MCF 10A (cell line): ENCODE measurements at regions of chr7 and their contacts with region 1.

Region 1: DNA sequence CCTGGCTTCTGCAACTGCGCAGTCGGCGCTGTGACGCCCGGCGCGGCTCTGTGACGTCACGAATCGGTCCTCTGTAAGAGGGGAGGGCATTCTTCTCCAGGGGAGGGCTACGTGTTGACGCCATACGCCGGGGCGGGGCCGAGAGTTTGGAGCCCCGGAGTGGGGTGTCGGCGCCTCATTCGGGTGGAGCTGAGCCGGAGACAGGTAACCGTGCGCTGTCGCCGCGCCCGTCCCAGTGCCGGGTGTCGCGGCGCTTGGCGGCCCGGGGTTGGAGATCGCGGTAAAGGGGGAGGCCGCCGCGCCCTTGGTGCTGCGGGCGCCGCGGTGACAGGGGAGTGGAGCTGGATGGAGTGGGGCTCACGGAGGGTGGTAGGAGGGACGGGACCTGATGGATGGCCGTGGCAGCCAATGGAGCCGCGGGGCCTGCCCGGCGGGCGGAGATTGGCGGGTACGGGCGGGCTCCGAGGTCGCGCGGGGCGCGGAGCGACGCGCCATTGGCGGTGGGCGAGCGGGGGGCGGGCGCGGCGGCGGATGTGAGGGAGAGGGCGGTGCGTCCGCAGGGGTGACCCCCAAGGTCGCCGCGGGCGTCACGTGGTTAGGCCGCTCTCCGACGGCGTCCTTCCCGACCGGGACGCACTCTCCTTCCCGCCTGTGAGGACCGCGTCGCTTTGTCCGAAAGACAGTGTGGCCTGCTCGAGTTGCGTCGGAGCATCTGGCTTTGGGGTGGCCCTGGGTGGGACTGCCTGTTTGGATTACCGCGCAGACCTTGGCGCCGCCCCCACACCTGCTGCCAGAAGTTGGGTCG is at the start of gene OGDH:
- DNase-seq: peak; percentile 98
- H3K4me3 Mint-ChIP-seq: peak within 1 kb of the TSS; percentile 97
- H3K27ac Mint-ChIP-seq: peak within 1 kb of the TSS; percentile 99
- H3K4me1 Mint-ChIP-seq: peaks cover 9% of the 10 kb centered on the region
- H3K27me3 Mint-ChIP-seq: no peaks in the 10 kb centered on the region
- CTCF ChIP-seq: no peak
- total RNA-seq, gene OGDH: 75.1 and 91.1 TPM in 2 replicates

Region 2: DNA sequence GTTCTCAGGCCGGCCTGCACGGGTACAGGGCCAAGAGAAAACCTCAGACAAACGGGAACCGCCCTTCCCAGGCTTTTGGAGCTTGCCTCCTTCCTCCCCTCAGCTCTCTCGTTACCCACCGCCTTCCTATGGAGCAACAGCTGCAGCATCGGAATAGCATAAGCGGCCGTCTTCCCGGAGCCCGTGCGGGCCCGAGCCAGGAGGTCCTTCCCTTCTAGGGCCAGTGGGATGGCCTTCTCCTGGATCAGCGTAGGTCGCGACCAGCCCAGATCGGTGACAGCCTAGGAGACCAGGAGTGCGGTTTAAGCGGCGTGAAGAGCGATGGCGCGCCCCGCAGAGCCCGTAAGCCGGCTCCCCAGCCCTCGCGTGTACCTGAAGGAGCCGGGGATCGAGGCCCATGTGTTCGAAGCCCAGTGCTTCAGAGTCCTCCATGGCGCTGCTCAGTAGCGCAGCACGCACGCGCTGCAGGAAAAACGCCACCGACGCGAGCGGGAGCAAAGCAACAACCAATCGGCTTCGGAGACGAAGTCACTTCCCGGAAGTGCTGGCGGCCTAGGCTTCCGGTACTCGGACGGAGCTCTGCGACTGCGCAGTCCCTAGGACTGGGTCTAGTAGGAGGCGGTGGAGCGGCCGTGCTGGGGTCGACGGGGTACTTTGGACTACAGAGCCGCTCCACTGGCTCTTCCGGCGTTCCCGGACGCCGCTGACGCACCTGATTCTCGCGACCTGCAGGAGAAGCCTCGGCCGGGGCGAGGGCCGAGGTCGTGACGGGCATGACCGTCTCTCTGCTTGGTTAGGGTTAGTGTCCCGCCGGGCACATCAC is 33.0 kb before region 1 on chr7 and contains the start of gene DDX56:
- CTCF ChIA-PET with region 1: no interaction called
- POLR2A ChIA-PET with region 1: interaction called, 15 read pairs
- intact Hi-C with region 1: no loop called
- DNase-seq: peak; percentile 94
- H3K4me3 Mint-ChIP-seq: peak within 1 kb of the TSS; percentile 98
- H3K27ac Mint-ChIP-seq: peak within 1 kb of the TSS; percentile 95
- H3K4me1 Mint-ChIP-seq: peaks cover 21% of the 10 kb centered on the region
- H3K27me3 Mint-ChIP-seq: no peaks in the 10 kb centered on the region
- CTCF ChIP-seq: no peak
- total RNA-seq, gene DDX56: 104 and 105 TPM in 2 replicates

Region 3: GRCh38 chr7:44617225-44617890 is 10.7 kb after region 1 on chr7:
- CTCF ChIA-PET with region 1: interaction called, 3 read pairs
- POLR2A ChIA-PET with region 1: interaction called, 23 read pairs
- intact Hi-C with region 1: no loop called
- DNase-seq: peak; percentile 9
- H3K4me3 Mint-ChIP-seq: no peak overlapping the region
- H3K27ac Mint-ChIP-seq: peak overlapping the region; percentile 75
- H3K4me1 Mint-ChIP-seq: peaks cover 30% of the 10 kb centered on the region
- H3K27me3 Mint-ChIP-seq: no peaks in the 10 kb centered on the region
- CTCF ChIP-seq: no peak

Region 4: GRCh38 chr7:44638611-44639557 is 32.2 kb after region 1 on chr7:
- CTCF ChIA-PET with region 1: interaction called, 4 read pairs
- POLR2A ChIA-PET with region 1: interaction called, 92 read pairs
- intact Hi-C with region 1: loop called (anchors 1 kb)
- DNase-seq: peak; percentile 90
- H3K4me3 Mint-ChIP-seq: peak overlapping the region; percentile 59
- H3K27ac Mint-ChIP-seq: peak overlapping the region; percentile 98
- H3K4me1 Mint-ChIP-seq: peaks cover 48% of the 10 kb centered on the region
- H3K27me3 Mint-ChIP-seq: no peaks in the 10 kb centered on the region
- CTCF ChIP-seq: no peak

Region 5: GRCh38 chr7:44735403-44736165 is 128.9 kb after region 1 on chr7:
- CTCF ChIA-PET with region 1: interaction called, 4 read pairs
- POLR2A ChIA-PET with region 1: interaction called, 13 read pairs
- intact Hi-C with region 1: no loop called
- DNase-seq: peak; percentile 95
- H3K4me3 Mint-ChIP-seq: no peak overlapping the region
- H3K27ac Mint-ChIP-seq: peak overlapping the region; percentile 69
- H3K4me1 Mint-ChIP-seq: peaks cover 31% of the 10 kb centered on the region
- H3K27me3 Mint-ChIP-seq: no peaks in the 10 kb centered on the region
- CTCF ChIP-seq: no peak

Region 6: GRCh38 chr7:44885394-44886317 is 279.0 kb after region 1 on chr7 and contains the start of gene PURB:
- CTCF ChIA-PET with region 1: no interaction called
- POLR2A ChIA-PET with region 1: interaction called, 48 read pairs
- intact Hi-C with region 1: no loop called
- DNase-seq: peak; percentile 96
- H3K4me3 Mint-ChIP-seq: peak within 1 kb of the TSS; percentile 93
- H3K27ac Mint-ChIP-seq: peak within 1 kb of the TSS; percentile 99
- H3K4me1 Mint-ChIP-seq: peaks cover 25% of the 10 kb centered on the region
- H3K27me3 Mint-ChIP-seq: no peaks in the 10 kb centered on the region
- CTCF ChIP-seq: no peak
- total RNA-seq, gene PURB: 21.3 and 27.9 TPM in 2 replicates

Region 7: DNA sequence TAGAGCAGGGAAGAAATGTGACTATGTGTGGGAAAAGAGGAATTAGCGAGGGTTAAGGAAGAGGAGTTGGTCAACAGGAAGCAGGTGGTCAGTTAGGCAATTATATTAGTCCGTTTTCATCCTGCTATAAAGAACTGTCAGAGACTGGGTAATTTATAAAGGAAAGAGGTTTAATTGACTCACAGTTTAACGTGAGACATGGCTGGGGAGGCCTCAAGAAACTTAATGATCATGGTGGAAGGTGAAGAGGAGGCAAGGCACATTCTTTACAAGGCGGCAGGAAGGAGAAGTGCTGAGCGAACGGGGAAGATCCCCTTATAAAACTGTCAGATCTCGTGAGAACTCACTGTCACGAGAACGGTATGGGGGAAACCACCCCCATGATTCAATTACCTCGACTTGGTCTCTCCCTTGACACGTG is 586.0 kb after region 1 on chr7:
- CTCF ChIA-PET with region 1: no interaction called
- POLR2A ChIA-PET with region 1: no interaction called
- intact Hi-C with region 1: no loop called
- DNase-seq: no peak
- H3K4me3 Mint-ChIP-seq: no peak overlapping the region
- H3K27ac Mint-ChIP-seq: no peak overlapping the region
- H3K4me1 Mint-ChIP-seq: no peaks in the 10 kb centered on the region
- H3K27me3 Mint-ChIP-seq: peaks cover 64% of the 10 kb centered on the region
- CTCF ChIP-seq: no peak